MCF 10A (cell line): ENCODE measurements at regions of chr17 and their contacts with region 1.

Region 1: GRCh38 chr17:61412143-61412859 is 12.7 kb downstream of the TBX2 start:
- DNase-seq: peak; percentile 72
- H3K4me3 Mint-ChIP-seq: peak overlapping the region; percentile 71
- H3K27ac Mint-ChIP-seq: peak overlapping the region; percentile 19
- H3K4me1 Mint-ChIP-seq: no peaks in the 10 kb centered on the region
- H3K27me3 Mint-ChIP-seq: no peaks in the 10 kb centered on the region
- CTCF ChIP-seq: peak; percentile 99

Region 2: GRCh38 chr17:60720763-60721531 is 691.4 kb before region 1 on chr17:
- CTCF ChIA-PET with region 1: interaction called, 5 read pairs
- POLR2A ChIA-PET with region 1: interaction called, 3 read pairs
- intact Hi-C with region 1: loop called (anchors 5 kb)
- DNase-seq: peak; percentile 62
- H3K4me3 Mint-ChIP-seq: no peak overlapping the region
- H3K27ac Mint-ChIP-seq: no peak overlapping the region
- H3K4me1 Mint-ChIP-seq: peaks cover 5% of the 10 kb centered on the region
- H3K27me3 Mint-ChIP-seq: no peaks in the 10 kb centered on the region
- CTCF ChIP-seq: peak; percentile 74

Region 3: GRCh38 chr17:61179380-61179806 is 232.9 kb before region 1 on chr17:
- CTCF ChIA-PET with region 1: no interaction called
- POLR2A ChIA-PET with region 1: no interaction called
- intact Hi-C with region 1: no loop called
- DNase-seq: no peak
- H3K4me3 Mint-ChIP-seq: no peak overlapping the region
- H3K27ac Mint-ChIP-seq: no peak overlapping the region
- H3K4me1 Mint-ChIP-seq: no peaks in the 10 kb centered on the region
- H3K27me3 Mint-ChIP-seq: no peaks in the 10 kb centered on the region
- CTCF ChIP-seq: no peak

Region 4: GRCh38 chr17:61399131-61400057 is 12.9 kb before region 1 on chr17 and contains the start of gene TBX2:
- CTCF ChIA-PET with region 1: interaction called, 10 read pairs
- POLR2A ChIA-PET with region 1: interaction called, 8 read pairs
- intact Hi-C with region 1: no loop called
- DNase-seq: peak; percentile 88
- H3K4me3 Mint-ChIP-seq: peak within 1 kb of the TSS; percentile 76
- H3K27ac Mint-ChIP-seq: no peak within 1 kb of the TSS
- H3K4me1 Mint-ChIP-seq: no peaks in the 10 kb centered on the region
- H3K27me3 Mint-ChIP-seq: no peaks in the 10 kb centered on the region
- CTCF ChIP-seq: no peak
- total RNA-seq, gene TBX2: 1.5 and 4.3 TPM in 2 replicates

Region 5: GRCh38 chr17:61454381-61455323 is 42.4 kb after region 1 on chr17:
- CTCF ChIA-PET with region 1: no interaction called
- POLR2A ChIA-PET with region 1: no interaction called
- intact Hi-C with region 1: no loop called
- DNase-seq: no peak
- H3K4me3 Mint-ChIP-seq: no peak overlapping the region
- H3K27ac Mint-ChIP-seq: no peak overlapping the region
- H3K4me1 Mint-ChIP-seq: no peaks in the 10 kb centered on the region
- H3K27me3 Mint-ChIP-seq: no peaks in the 10 kb centered on the region
- CTCF ChIP-seq: no peak

Region 6: GRCh38 chr17:61574542-61575174 is 162.4 kb after region 1 on chr17:
- CTCF ChIA-PET with region 1: interaction called, 30 read pairs
- POLR2A ChIA-PET with region 1: no interaction called
- intact Hi-C with region 1: loop called (anchors 2 kb)
- DNase-seq: peak; percentile 53
- H3K4me3 Mint-ChIP-seq: no peak overlapping the region
- H3K27ac Mint-ChIP-seq: no peak overlapping the region
- H3K4me1 Mint-ChIP-seq: peaks cover 6% of the 10 kb centered on the region
- H3K27me3 Mint-ChIP-seq: no peaks in the 10 kb centered on the region
- CTCF ChIP-seq: peak; percentile 25

Region 7: DNA sequence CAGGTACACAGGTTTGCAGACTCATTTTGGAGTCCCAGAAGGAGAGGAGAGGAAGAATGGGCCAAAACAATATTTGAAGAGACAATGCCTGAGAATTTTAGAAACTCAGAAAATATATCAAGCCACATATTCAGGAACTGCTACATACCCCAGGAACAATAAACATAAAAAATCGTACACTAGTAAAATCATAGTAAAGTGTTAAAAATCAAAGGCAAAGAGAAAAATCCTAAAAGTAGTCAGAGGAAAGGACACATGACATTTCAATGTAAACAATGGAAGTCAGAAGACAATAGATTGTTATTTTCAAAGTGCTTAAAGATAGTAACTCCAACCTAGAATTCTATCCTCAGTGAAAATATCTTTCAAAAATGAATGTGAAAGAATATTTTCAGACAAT is 207.2 kb after region 1 on chr17:
- CTCF ChIA-PET with region 1: no interaction called
- POLR2A ChIA-PET with region 1: no interaction called
- intact Hi-C with region 1: no loop called
- DNase-seq: peak; percentile 10
- H3K4me3 Mint-ChIP-seq: no peak overlapping the region
- H3K27ac Mint-ChIP-seq: no peak overlapping the region
- H3K4me1 Mint-ChIP-seq: no peaks in the 10 kb centered on the region
- H3K27me3 Mint-ChIP-seq: no peaks in the 10 kb centered on the region
- CTCF ChIP-seq: no peak

Region 8: DNA sequence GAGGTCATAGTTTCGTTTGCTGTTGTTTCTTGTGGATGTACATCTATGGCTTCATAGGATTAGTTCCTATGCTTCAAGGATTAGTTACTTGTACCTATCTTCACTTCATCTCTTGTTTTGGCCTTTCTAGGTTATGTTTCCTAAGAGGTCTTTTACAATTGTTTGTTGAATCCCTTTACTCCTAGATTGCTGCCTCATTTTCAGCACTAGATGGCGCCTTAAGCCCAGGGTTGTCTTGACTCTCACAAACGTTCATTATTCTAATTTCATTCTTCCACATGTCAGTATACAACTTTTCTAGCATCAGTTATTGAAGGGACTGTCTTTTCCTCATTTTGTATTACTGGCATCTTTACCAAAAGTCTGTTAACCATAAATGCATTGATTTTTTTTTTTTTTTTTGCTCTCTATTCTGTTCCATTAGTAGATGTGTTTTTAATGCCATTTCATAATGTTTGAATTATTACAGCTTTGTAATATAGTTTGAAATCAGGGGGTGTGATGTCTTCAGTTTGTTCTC is 223.7 kb after region 1 on chr17:
- CTCF ChIA-PET with region 1: interaction called, 3 read pairs
- POLR2A ChIA-PET with region 1: no interaction called
- intact Hi-C with region 1: loop called (anchors 1 kb)
- DNase-seq: peak; percentile 75
- H3K4me3 Mint-ChIP-seq: no peak overlapping the region
- H3K27ac Mint-ChIP-seq: no peak overlapping the region
- H3K4me1 Mint-ChIP-seq: no peaks in the 10 kb centered on the region
- H3K27me3 Mint-ChIP-seq: no peaks in the 10 kb centered on the region
- CTCF ChIP-seq: peak; percentile 80

Region 9: GRCh38 chr17:62065598-62066468 is 653.5 kb after region 1 on chr17:
- CTCF ChIA-PET with region 1: no interaction called
- POLR2A ChIA-PET with region 1: no interaction called
- intact Hi-C with region 1: loop called (anchors 5 kb)
- DNase-seq: peak; percentile 98
- H3K4me3 Mint-ChIP-seq: peak overlapping the region; percentile 90
- H3K27ac Mint-ChIP-seq: peak overlapping the region; percentile 95
- H3K4me1 Mint-ChIP-seq: peaks cover 24% of the 10 kb centered on the region
- H3K27me3 Mint-ChIP-seq: no peaks in the 10 kb centered on the region
- CTCF ChIP-seq: peak; percentile 77